ENCODE measurements at regions of chr16 and their contacts with region 1.

Region 1: GRCh38 chr16:29738514-29738913 is 7.3 kb downstream of the C16orf54 start:
- DNase-seq: peak in 8 of 9 experiments; percentile 41 to 92 (median 65)
- ATAC-seq: peak; percentile 92
- H3K4me3 ChIP-seq: peak overlapping the region in 1 of 2 experiments; percentile 21
- H3K4me3 Mint-ChIP-seq: peak overlapping the region; percentile 53
- H3K27ac ChIP-seq: peak overlapping the region; percentile 36 to 67
- H3K27ac Mint-ChIP-seq: peak overlapping the region; percentile 87
- H3K4me1 ChIP-seq: peaks cover 74% of the 10 kb centered on the region
- H3K4me1 Mint-ChIP-seq: peaks cover 77% of the 10 kb centered on the region
- H3K27me3 ChIP-seq: no peaks in the 10 kb centered on the region
- H3K27me3 Mint-ChIP-seq: no peaks in the 10 kb centered on the region
- CTCF ChIP-seq: no peak

Region 2: GRCh38 chr16:29710227-29711219 is 28.0 kb before region 1 on chr16:
- CTCF ChIA-PET with region 1: interaction called, 6 read pairs
- POLR2A ChIA-PET with region 1: interaction called, 6 read pairs
- intact Hi-C with region 1: loop called in 1 of 2 experiments (anchors 2 kb)
- DNase-seq: peak in 7 of 9 experiments; percentile 22 to 84 (median 47)
- ATAC-seq: peak; percentile 100
- H3K4me3 ChIP-seq: no peak overlapping the region
- H3K4me3 Mint-ChIP-seq: no peak overlapping the region
- H3K27ac ChIP-seq: no peak overlapping the region
- H3K27ac Mint-ChIP-seq: peak overlapping the region; percentile 79
- H3K4me1 ChIP-seq: peaks cover 10% of the 10 kb centered on the region
- H3K4me1 Mint-ChIP-seq: peaks cover 11% of the 10 kb centered on the region
- H3K27me3 ChIP-seq: no peaks in the 10 kb centered on the region
- H3K27me3 Mint-ChIP-seq: no peaks in the 10 kb centered on the region
- CTCF ChIP-seq: peak; percentile 76

Region 3: DNA sequence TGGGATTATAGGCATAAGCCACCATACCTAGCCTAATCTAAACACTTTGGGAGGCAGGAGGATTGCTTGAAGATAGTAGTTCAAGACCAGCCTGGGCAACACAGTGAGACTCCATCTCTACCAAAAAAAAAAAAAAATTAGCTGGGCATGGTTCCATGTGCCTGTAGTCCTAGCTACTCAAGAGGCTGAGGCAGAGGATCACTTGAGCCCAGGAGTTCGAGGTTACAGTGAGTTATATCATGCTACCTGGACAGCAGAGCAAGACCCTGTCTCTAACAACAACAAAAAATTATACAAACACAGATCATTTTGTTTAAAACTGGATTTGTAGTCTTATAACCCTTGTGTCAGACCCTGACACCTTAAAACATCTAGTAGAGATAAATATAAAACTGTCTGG is 15.0 kb after region 1 on chr16:
- CTCF ChIA-PET with region 1: interaction called, 3 read pairs
- POLR2A ChIA-PET with region 1: interaction called, 4 read pairs
- intact Hi-C with region 1: loop called in 1 of 2 experiments (anchors 2 kb)
- DNase-seq: no peak
- ATAC-seq: no peak
- H3K4me3 ChIP-seq: no peak overlapping the region
- H3K4me3 Mint-ChIP-seq: no peak overlapping the region
- H3K27ac ChIP-seq: no peak overlapping the region
- H3K27ac Mint-ChIP-seq: no peak overlapping the region
- H3K4me1 ChIP-seq: peaks cover 27% of the 10 kb centered on the region
- H3K4me1 Mint-ChIP-seq: peaks cover 39% of the 10 kb centered on the region
- H3K27me3 ChIP-seq: no peaks in the 10 kb centered on the region
- H3K27me3 Mint-ChIP-seq: no peaks in the 10 kb centered on the region
- CTCF ChIP-seq: no peak

Region 4: DNA sequence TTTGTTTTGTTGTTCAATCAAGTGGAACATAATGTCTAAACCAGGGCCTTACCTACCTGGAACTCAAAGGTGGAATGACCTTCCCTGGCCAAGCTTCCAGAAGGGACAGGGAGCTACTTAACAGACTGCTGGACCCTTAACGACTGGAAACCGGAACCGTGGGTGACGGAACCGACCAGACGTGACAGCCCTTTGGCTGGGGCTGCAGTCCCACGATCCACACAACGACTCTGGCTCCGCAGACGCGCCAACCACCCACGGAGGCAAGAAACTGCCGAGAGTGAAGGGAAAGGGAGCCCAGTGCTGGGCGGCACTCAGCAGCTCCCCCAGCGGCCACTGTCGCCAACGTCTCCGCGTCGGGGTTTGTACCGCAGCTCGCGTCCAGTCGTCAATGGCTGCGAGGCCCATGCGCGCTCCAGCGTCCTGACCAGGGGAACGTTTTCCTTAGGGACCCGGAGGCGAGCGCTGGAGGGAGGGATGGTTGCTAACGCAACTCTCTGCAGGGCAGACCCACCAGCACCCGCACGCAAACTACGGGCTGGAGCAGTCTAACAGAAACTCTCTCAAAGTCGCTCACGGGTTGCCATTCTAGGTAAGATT is 46.5 kb after region 1 on chr16:
- CTCF ChIA-PET with region 1: interaction called, 19 read pairs
- POLR2A ChIA-PET with region 1: interaction called, 31 read pairs
- intact Hi-C with region 1: loop called (anchors 1 kb)
- DNase-seq: peak; percentile 61 to 87 (median 78)
- ATAC-seq: peak; percentile 89
- H3K4me3 ChIP-seq: peak overlapping the region; percentile 21 to 34
- H3K4me3 Mint-ChIP-seq: peak overlapping the region; percentile 75
- H3K27ac ChIP-seq: peak overlapping the region in 1 of 2 experiments; percentile 4
- H3K27ac Mint-ChIP-seq: peak overlapping the region; percentile 69
- H3K4me1 ChIP-seq: peaks cover 22% of the 10 kb centered on the region
- H3K4me1 Mint-ChIP-seq: peaks cover 24% of the 10 kb centered on the region
- H3K27me3 ChIP-seq: no peaks in the 10 kb centered on the region
- H3K27me3 Mint-ChIP-seq: no peaks in the 10 kb centered on the region
- CTCF ChIP-seq: peak; percentile 76

Measured in CD8-positive, alpha-beta T cell (primary cell).